ENCODE measurements at regions of chr7 and their contacts with region 1.

Region 1: GRCh38 chr7:99616359-99617191 is at the start of gene ZSCAN25:
- DNase-seq: peak; percentile 91
- ATAC-seq: peak; percentile 94
- H3K4me3 ChIP-seq: peak within 1 kb of the TSS; percentile 99
- H3K27ac ChIP-seq: peak within 1 kb of the TSS; percentile 61
- H3K4me1 ChIP-seq: peaks cover 9 to 24% of the 10 kb centered on the region in 2 experiments
- H3K27me3 ChIP-seq: no peaks in the 10 kb centered on the region
- CTCF ChIP-seq: peak; percentile 43 to 53 (median 51)
- POLR2A ChIP-seq: peak; percentile 77
- RAD21 ChIP-seq: peak; percentile 65
- total RNA-seq, gene ZSCAN25: 14.0 TPM

Region 2: DNA sequence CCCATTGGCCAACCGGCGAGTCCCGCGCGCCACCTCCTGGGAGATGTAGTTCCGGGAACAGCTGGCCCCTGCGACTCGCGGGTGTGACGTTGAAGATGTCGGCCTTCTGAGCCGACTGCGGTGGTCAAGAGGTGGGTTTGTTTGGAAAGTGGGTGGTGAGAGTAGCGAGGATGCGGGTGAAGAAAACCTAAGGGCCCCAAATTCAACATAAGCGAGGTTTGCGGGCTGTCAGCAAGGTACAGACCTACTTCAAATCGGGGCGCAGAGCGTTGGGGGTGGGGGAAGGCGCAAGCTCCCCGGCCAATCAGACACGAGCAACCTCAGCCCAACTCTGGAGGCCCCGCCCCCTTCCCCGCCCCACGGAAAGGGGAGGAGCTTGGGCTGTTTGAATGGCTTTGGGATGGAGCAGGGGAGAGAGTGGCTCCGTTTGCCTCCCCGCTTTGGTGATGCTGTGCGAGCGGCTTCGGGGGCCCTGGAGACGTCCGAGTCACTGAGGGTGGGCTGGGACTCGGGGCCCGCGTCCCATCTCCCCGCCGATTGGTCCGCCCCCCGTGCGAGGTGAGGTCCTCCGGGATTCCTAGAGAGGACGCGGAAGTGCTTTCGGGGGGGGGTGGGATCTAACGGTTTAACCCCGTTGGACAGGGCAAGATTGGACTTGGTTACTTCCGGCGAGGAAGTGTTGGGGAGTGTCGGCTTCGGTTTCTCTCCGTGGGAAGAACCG is 111.8 kb before region 1 on chr7 and contains the start of gene ZKSCAN5:
- CTCF ChIA-PET with region 1: interaction called, 4 read pairs
- POLR2A ChIA-PET with region 1: interaction called, 6 read pairs
- RAD21 ChIA-PET with region 1: no interaction called
- intact Hi-C with region 1: loop called (anchors 5 kb)
- DNase-seq: peak; percentile 94
- ATAC-seq: peak; percentile 81
- H3K4me3 ChIP-seq: peak within 1 kb of the TSS; percentile 87 to 95
- H3K27ac ChIP-seq: peak within 1 kb of the TSS; percentile 82
- H3K4me1 ChIP-seq: peaks cover 11 to 23% of the 10 kb centered on the region in 2 experiments; a peak in 3 of 4 replicates
- H3K27me3 ChIP-seq: no peaks in the 10 kb centered on the region
- CTCF ChIP-seq: no peak
- POLR2A ChIP-seq: peak; percentile 76
- RAD21 ChIP-seq: no peak
- total RNA-seq, gene ZKSCAN5: 10.2 TPM

Region 3: DNA sequence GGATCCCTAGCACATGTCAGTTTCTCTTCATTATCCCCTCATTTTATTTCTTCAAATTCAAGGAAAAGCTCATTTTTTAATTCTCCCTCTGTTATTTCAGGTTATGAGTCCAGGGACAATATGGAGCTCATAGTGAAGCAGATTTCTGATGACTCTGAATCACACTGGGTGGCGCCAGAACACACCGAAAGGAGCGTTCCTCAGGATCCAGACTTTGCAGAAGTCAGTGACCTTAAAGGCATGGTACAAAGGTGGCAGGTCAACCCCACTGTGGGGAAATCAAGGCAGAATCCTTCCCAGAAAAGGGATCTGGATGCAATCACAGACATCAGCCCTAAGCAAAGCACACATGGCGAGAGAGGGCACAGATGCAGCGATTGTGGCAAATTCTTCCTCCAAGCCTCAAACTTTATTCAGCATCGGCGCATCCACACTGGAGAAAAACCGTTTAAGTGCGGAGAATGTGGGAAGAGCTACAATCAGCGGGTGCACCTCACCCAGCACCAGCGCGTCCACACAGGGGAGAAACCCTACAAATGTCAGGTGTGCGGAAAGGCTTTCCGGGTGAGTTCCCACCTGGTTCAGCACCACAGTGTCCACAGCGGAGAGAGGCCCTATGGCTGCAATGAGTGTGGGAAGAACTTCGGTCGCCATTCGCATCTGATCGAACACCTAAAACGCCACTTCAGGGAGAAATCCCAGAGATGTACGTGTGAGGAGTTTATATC is 90.7 kb before region 1 on chr7:
- CTCF ChIA-PET with region 1: no interaction called
- POLR2A ChIA-PET with region 1: no interaction called
- RAD21 ChIA-PET with region 1: no interaction called
- intact Hi-C with region 1: loop called (anchors 10 kb)
- DNase-seq: peak; percentile 13
- ATAC-seq: peak; percentile 74
- H3K4me3 ChIP-seq: no peak overlapping the region
- H3K27ac ChIP-seq: no peak overlapping the region
- H3K4me1 ChIP-seq: no peaks in the 10 kb centered on the region
- H3K27me3 ChIP-seq: no peaks in the 10 kb centered on the region
- CTCF ChIP-seq: peak; percentile 36 to 64 (median 43); a peak in 4 of 6 replicates
- POLR2A ChIP-seq: no peak
- RAD21 ChIP-seq: peak; percentile 76

Region 4: GRCh38 chr7:99558306-99559174 is 58.0 kb before region 1 on chr7 and contains the start of gene ZNF655:
- CTCF ChIA-PET with region 1: no interaction called
- POLR2A ChIA-PET with region 1: interaction called, 3 read pairs
- RAD21 ChIA-PET with region 1: no interaction called
- intact Hi-C with region 1: loop called (anchors 5 kb)
- DNase-seq: peak; percentile 82
- ATAC-seq: peak; percentile 76
- H3K4me3 ChIP-seq: peak within 1 kb of the TSS; percentile 90 to 95
- H3K27ac ChIP-seq: peak within 1 kb of the TSS; percentile 93
- H3K4me1 ChIP-seq: peaks cover 28 to 48% of the 10 kb centered on the region in 2 experiments
- H3K27me3 ChIP-seq: no peaks in the 10 kb centered on the region
- CTCF ChIP-seq: no peak
- POLR2A ChIP-seq: peak; percentile 74
- RAD21 ChIP-seq: no peak
- total RNA-seq, gene ZNF655: 45.0 TPM

Measured in HCT116 (cell line).